Left ventricle myocardium inferior (tissue), 1 donor: ENCODE measurements at regions of chr1 and their contacts with region 1.

Region 1: GRCh38 chr1:156456622-156457465 is 43.7 kb downstream of the MEF2D start:
- DNase-seq: peak; percentile 96
- H3K4me3 ChIP-seq: peak overlapping the region; percentile 84
- H3K27ac ChIP-seq: peak overlapping the region; percentile 100
- H3K4me1 ChIP-seq: peaks cover 15% of the 10 kb centered on the region
- H3K27me3 ChIP-seq: no peaks in the 10 kb centered on the region
- CTCF ChIP-seq: no peak

Region 2: GRCh38 chr1:156226116-156226538 is 230.7 kb before region 1 on chr1:
- intact Hi-C with region 1: no loop called
- DNase-seq: no peak
- H3K4me3 ChIP-seq: no peak overlapping the region
- H3K27ac ChIP-seq: no peak overlapping the region
- H3K4me1 ChIP-seq: no peaks in the 10 kb centered on the region
- H3K27me3 ChIP-seq: no peaks in the 10 kb centered on the region
- CTCF ChIP-seq: no peak

Region 3: DNA sequence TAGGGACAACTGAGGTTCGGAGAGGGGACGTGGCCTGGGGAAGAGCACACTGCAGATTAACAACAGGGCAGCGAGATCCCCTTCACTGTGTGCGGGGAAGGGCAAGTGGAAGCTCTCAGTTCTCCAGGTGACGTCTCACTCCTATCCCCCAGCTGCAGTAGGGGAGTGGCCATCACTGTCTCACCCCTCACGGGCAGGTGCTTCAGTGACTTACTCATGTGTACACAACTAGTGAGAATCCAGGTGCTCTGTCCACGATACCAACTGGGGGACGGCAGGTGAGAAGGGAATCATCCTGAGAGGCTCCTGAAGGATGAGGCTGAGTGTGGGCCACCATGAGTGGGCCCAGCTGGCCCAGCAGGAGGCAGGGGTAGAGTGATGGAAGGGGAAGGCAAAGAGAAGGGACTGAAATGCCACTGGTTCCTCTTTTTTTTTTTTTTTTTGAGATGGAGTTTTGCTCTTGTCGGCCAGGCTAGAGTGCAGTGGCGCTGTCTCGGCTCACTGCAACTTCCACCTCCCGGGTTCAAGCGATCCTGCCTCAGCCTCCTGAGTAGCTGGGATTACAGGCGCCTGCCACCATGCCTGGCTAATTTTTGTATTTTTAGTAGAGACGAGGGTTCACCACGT is 61.9 kb before region 1 on chr1:
- intact Hi-C with region 1: no loop called
- DNase-seq: no peak
- H3K4me3 ChIP-seq: no peak overlapping the region
- H3K27ac ChIP-seq: no peak overlapping the region
- H3K4me1 ChIP-seq: no peaks in the 10 kb centered on the region
- H3K27me3 ChIP-seq: peaks cover 43% of the 10 kb centered on the region
- CTCF ChIP-seq: no peak

Region 4: GRCh38 chr1:156500797-156501499 is 44.1 kb after region 1 on chr1:
- intact Hi-C with region 1: loop called (anchors 10 kb)
- DNase-seq: peak; percentile 95
- H3K4me3 ChIP-seq: peak overlapping the region; percentile 98
- H3K27ac ChIP-seq: peak overlapping the region; percentile 100
- H3K4me1 ChIP-seq: peaks cover 93% of the 10 kb centered on the region
- H3K27me3 ChIP-seq: no peaks in the 10 kb centered on the region
- CTCF ChIP-seq: peak; percentile 62

Region 5: GRCh38 chr1:156601122-156601830 is 144.4 kb after region 1 on chr1 and contains the start of gene GPATCH4:
- intact Hi-C with region 1: loop called (anchors 10 kb)
- DNase-seq: peak; percentile 68
- H3K4me3 ChIP-seq: peak within 1 kb of the TSS; percentile 76
- H3K27ac ChIP-seq: peak within 1 kb of the TSS; percentile 86
- H3K4me1 ChIP-seq: peaks cover 30% of the 10 kb centered on the region
- H3K27me3 ChIP-seq: no peaks in the 10 kb centered on the region
- CTCF ChIP-seq: no peak
- total RNA-seq, gene GPATCH4: 15.1 TPM